Mammary epithelial cell (primary cell): ENCODE measurements at regions of chr17 and their contacts with region 1.

Region 1: DNA sequence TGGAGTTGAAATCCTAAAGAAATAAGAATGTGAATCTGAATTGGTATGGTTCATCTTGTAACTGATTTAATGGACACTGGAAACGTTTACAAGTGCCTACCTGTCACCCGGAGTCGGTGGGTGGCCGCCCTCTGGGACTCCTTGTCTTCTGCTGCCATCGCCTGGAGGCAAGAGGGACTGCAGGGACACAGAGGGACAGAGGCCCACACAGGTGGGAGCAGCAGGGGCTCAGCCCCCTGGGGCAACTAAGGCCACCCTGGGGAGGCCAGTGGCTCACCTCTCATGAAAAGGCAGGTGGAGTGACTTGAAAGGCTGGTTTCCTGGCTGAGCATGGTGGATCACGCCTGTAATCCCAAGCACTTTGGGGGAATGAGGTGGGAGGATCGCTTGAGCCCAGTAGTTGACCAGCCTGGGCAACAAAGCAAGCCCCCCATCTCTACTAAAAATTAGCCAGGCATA is 23.2 kb downstream of the TMEM92 start:
- DNase-seq: no peak
- H3K4me3 ChIP-seq: no peak overlapping the region
- H3K27ac ChIP-seq: no peak overlapping the region
- H3K4me1 ChIP-seq: no peaks in the 10 kb centered on the region
- H3K27me3 ChIP-seq: no peaks in the 10 kb centered on the region
- CTCF ChIP-seq: peak; percentile 82 to 93

Region 2: DNA sequence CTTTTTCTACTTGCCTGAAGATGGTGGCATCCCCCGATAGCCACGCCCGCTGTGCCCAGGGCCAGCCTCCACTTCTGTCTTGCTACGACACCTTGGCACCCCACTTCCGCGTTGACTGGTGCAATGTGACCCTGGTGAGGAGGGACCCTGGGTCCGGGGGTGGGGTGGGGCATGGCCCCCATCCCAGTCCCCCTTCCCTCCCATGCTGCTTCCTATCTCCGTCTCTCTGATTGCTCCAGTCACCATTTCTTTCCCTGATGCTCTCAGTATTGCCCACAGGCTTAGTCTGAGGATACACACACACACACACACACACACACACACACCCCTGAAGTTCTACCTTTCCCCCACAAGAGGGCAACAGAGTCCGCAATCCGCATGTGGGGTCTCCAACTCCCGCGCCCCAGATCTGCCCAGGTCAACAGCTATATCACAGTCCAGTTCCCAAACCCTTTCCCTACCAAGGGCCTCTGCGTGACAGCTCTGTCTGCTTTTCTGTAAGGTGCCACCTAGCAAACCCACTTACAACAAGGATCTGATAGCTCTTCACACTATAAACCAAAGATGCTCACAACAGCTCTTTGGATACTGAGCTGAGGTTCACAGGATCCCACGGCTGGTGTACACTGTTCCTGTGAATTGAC is 128.2 kb before region 1 on chr17:
- CTCF ChIA-PET with region 1: interaction called, 9 read pairs
- dilution Hi-C with region 1: no loop called
- in situ Hi-C with region 1: no loop called
- intact Hi-C with region 1: loop called (anchors 1 kb)
- DNase-seq: peak; percentile 68
- H3K4me3 ChIP-seq: no peak overlapping the region
- H3K27ac ChIP-seq: no peak overlapping the region
- H3K4me1 ChIP-seq: peaks cover 4% of the 10 kb centered on the region
- H3K27me3 ChIP-seq: no peaks in the 10 kb centered on the region
- CTCF ChIP-seq: peak; percentile 90 to 94

Region 3: GRCh38 chr17:50257616-50258224 is 39.7 kb before region 1 on chr17:
- CTCF ChIA-PET with region 1: no interaction called
- dilution Hi-C with region 1: no loop called
- in situ Hi-C with region 1: no loop called
- intact Hi-C with region 1: no loop called
- DNase-seq: no peak
- H3K4me3 ChIP-seq: no peak overlapping the region
- H3K27ac ChIP-seq: no peak overlapping the region
- H3K4me1 ChIP-seq: no peaks in the 10 kb centered on the region
- H3K27me3 ChIP-seq: no peaks in the 10 kb centered on the region
- CTCF ChIP-seq: no peak